Activated T-helper 1 cell treated with anti-CD3 and anti-CD28 coated beads, Interleukin-12 subunit alpha, Interleukin-12 subunit beta, Interleukin-2, Interleukin-4 antibody, amounts not matched to agents 30 ng/mL and 10 ng/mL and 1 ng/mL, durations not matched to agents 14 hours and 24 hours and 36 hours (primary cell): ENCODE measurements at regions of chr6 and their contacts with region 1.

Region 1: DNA sequence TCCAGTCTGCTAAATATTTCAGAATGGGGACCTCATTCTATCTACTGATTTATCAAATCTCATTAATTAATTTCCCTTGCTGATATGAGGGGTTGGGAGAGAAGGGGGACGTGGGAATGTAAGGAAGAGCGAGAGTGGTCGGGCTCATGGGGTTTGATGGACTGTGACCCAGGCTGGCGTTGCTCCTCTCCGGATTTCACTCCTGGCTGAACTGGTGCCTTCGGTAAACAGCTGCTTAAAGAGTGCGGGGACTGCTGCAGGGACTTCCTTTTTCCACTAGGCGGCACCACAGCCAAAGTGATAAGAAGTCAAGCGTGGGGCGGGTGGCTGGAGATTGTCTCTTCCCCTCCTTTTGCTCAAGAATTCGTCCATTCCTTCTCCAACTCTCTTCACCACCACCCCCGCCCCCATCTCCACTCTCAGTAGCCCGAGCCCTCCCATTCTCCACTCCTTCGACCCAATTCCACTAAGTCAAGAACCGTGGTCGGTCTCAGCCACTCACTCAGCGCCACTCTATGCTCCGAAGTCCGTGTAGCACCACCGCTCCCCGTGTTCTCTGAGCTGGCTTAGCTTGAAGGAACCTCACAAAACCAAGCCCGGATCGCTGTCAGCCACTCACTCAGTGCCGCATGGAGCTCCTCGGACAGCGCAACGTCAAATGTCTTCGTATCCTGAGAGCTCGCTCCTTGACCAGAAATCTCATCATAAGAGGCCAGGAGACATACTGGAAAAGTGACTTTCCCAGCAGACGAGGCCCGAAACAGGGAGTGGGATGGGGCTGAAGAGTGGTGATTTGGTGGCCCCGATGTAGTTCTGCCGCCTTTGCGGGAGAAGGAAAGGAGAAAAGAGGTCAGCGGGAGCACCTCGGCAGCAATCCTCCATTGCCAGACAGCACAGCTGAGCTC is 9.7 kb downstream of the TRIM31 start:
- DNase-seq: peak; percentile 79
- H3K4me3 Mint-ChIP-seq: peak overlapping the region; percentile 82
- H3K27ac Mint-ChIP-seq: peak overlapping the region; percentile 51
- H3K4me1 Mint-ChIP-seq: peaks cover 43% of the 10 kb centered on the region
- H3K27me3 Mint-ChIP-seq: peaks cover 55% of the 10 kb centered on the region

Region 2: GRCh38 chr6:30061092-30061857 is 41.9 kb before region 1 on chr6 and contains the start of gene POLR1H:
- intact Hi-C with region 1: loop called (anchors 1 kb)
- DNase-seq: peak; percentile 84
- H3K4me3 Mint-ChIP-seq: peak within 1 kb of the TSS; percentile 98
- H3K27ac Mint-ChIP-seq: peak within 1 kb of the TSS; percentile 99
- H3K4me1 Mint-ChIP-seq: peaks cover 39% of the 10 kb centered on the region
- H3K27me3 Mint-ChIP-seq: no peaks in the 10 kb centered on the region
- total RNA-seq, gene POLR1H: 79.7 and 82.7 TPM in 2 replicates

Region 3: GRCh38 chr6:30143780-30144179 is 40.6 kb after region 1 on chr6:
- intact Hi-C with region 1: no loop called
- DNase-seq: no peak
- H3K4me3 Mint-ChIP-seq: no peak overlapping the region
- H3K27ac Mint-ChIP-seq: no peak overlapping the region
- H3K4me1 Mint-ChIP-seq: peaks cover 10% of the 10 kb centered on the region
- H3K27me3 Mint-ChIP-seq: peaks cover 40% of the 10 kb centered on the region

Region 4: DNA sequence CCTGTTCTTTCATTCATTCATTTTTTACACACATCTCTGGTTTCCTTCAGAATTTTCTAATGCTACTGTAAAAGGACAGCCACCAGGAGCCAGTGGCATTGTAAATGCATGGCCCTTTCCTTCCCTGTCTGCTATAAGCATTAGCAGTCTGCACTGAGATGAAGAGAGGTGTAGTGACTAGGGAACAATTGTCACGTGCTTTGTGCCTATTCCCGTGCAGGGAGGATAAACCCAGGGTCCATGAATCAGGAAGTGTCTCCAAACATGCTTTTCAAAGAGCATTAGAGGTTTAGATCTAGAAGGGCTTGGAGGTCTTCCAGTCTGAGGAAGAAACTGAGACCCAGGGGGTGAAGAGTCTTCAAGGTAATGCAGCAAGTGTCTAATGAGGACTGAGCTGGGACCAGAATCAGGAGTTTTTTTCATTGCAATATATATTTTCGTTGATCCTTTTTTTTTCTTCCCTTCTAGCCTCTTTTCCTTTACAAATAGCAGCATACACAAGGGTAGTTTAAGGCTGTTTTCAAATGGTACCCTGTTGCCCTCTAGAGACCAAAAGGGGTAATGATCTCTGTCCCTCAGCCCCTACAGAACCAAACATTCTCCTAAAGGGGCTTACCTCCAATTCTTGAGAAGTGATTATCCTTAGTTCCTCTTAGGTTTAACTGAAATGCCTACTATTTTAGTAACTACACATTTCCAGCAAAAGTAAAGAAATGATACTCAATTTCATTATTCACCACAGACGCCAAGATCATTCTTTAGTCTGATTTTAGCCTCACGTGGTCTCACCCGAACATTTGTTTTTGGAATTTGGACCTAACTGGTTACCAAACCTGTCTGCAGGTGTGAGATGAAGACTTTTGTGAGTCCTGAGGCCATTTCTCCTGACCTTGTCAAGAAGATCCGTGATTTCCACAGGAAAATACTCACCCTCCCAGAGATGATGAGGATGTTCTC is 66.7 kb after region 1 on chr6:
- intact Hi-C with region 1: loop called (anchors 1 kb)
- DNase-seq: no peak
- H3K4me3 Mint-ChIP-seq: no peak overlapping the region
- H3K27ac Mint-ChIP-seq: no peak overlapping the region
- H3K4me1 Mint-ChIP-seq: peaks cover 46% of the 10 kb centered on the region
- H3K27me3 Mint-ChIP-seq: peaks cover 39% of the 10 kb centered on the region

Region 5: DNA sequence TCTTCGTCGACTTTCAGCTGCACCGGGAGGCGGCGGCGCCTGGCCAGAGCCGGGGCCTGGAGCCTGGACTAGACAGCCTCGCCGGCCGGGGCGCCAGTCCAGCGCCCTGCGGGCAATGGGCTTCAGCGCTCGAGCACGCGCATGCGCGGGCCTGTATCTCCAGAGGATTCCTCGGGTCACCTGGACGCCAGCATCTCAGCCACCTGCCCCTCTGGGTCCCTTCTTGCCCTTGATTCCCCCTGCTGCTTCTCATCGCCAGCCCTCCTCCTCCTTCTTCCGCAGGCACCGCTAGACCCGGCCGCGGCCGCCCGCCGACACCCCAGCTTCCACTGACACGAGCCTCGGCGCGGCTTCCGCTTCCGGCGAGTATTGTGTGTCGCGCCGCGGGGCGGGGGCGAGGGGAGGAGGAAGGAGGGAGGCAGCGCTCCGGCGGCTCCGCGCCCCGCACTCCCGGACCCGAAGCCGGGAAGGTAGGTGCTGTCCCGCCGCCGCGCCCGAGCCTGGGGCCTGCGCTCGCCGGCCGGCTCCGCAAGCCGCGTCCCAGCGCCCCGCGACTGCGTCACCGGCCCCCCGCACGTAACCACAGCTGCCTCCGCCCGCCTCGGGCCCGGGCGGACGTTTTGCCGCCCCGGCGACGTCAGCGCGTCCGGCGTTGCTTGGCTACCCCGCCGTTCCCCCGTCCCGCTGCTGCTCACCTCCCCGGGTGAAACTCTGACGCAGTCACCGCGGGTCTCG is 223.5 kb after region 1 on chr6 and contains the start of gene TRIM39:
- intact Hi-C with region 1: loop called (anchors 1 kb)
- DNase-seq: peak; percentile 85
- H3K4me3 Mint-ChIP-seq: peak within 1 kb of the TSS; percentile 99
- H3K27ac Mint-ChIP-seq: peak within 1 kb of the TSS; percentile 100
- H3K4me1 Mint-ChIP-seq: peaks cover 54% of the 10 kb centered on the region
- H3K27me3 Mint-ChIP-seq: no peaks in the 10 kb centered on the region
- total RNA-seq, gene TRIM39: 14.2 and 15.6 TPM in 2 replicates

Region 6: GRCh38 chr6:30396833-30397479 is 293.7 kb after region 1 on chr6:
- intact Hi-C with region 1: loop called (anchors 5 kb)
- DNase-seq: peak; percentile 74
- H3K4me3 Mint-ChIP-seq: no peak overlapping the region
- H3K27ac Mint-ChIP-seq: no peak overlapping the region
- H3K4me1 Mint-ChIP-seq: peaks cover 11% of the 10 kb centered on the region
- H3K27me3 Mint-ChIP-seq: peaks cover 41% of the 10 kb centered on the region